Activated CD8-positive, alpha-beta T cell treated with anti-CD3 and anti-CD28 coated beads, Interleukin-2, amount 10 ng/mL, durations not matched to agents 7 days and 5 days (primary cell): ENCODE measurements at regions of chr1 and their contacts with region 1.

Region 1: GRCh38 chr1:30801771-30802198 is 44.2 kb upstream of the LAPTM5 start:
- DNase-seq: peak; percentile 83
- ATAC-seq: peak; percentile 81
- H3K4me3 Mint-ChIP-seq: no peak overlapping the region
- H3K27ac Mint-ChIP-seq: no peak overlapping the region
- H3K4me1 Mint-ChIP-seq: peaks cover 7% of the 10 kb centered on the region
- H3K27me3 Mint-ChIP-seq: peaks cover 44% of the 10 kb centered on the region

Region 2: GRCh38 chr1:30790850-30791778 is 10.7 kb before region 1 on chr1:
- CTCF ChIA-PET with region 1: interaction called, 30 read pairs
- POLR2A ChIA-PET with region 1: interaction called, 3 read pairs
- DNase-seq: peak; percentile 39
- ATAC-seq: peak; percentile 55
- H3K4me3 Mint-ChIP-seq: no peak overlapping the region
- H3K27ac Mint-ChIP-seq: no peak overlapping the region
- H3K4me1 Mint-ChIP-seq: peaks cover 14% of the 10 kb centered on the region
- H3K27me3 Mint-ChIP-seq: peaks cover 22% of the 10 kb centered on the region

Region 3: DNA sequence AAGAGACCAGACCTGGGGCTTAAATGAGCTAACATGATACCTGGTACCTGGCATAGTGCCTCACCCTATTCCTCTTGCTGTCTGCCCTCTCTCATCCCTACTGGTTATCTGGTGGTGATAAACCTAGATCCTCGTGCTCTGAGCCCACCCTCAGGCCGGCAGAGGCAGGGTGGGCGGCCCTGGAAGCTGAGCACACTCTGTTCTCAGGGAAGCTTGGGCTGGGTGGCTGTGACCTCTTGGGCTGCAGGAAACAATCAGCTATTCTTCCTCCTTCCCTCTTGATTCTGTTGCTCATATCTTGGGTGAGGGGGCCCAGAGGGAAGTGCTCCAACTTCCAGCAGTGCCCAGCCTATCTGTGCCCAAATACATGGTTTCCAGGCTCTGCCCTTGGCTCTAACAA is 64.8 kb after region 1 on chr1:
- CTCF ChIA-PET with region 1: interaction called, 14 read pairs
- POLR2A ChIA-PET with region 1: no interaction called
- DNase-seq: no peak
- ATAC-seq: no peak
- H3K4me3 Mint-ChIP-seq: no peak overlapping the region
- H3K27ac Mint-ChIP-seq: no peak overlapping the region
- H3K4me1 Mint-ChIP-seq: peaks cover 5% of the 10 kb centered on the region
- H3K27me3 Mint-ChIP-seq: peaks cover 24% of the 10 kb centered on the region

Region 4: GRCh38 chr1:30911046-30911954 is 109.5 kb after region 1 on chr1:
- CTCF ChIA-PET with region 1: interaction called, 108 read pairs
- POLR2A ChIA-PET with region 1: interaction called, 3 read pairs
- DNase-seq: peak; percentile 67
- ATAC-seq: no peak
- H3K4me3 Mint-ChIP-seq: no peak overlapping the region
- H3K27ac Mint-ChIP-seq: no peak overlapping the region
- H3K4me1 Mint-ChIP-seq: peaks cover 25% of the 10 kb centered on the region
- H3K27me3 Mint-ChIP-seq: peaks cover 29% of the 10 kb centered on the region

Region 5: GRCh38 chr1:30929135-30929889 is 127.5 kb after region 1 on chr1:
- CTCF ChIA-PET with region 1: interaction called, 81 read pairs
- POLR2A ChIA-PET with region 1: interaction called, 3 read pairs
- DNase-seq: peak; percentile 68
- ATAC-seq: peak; percentile 76
- H3K4me3 Mint-ChIP-seq: no peak overlapping the region
- H3K27ac Mint-ChIP-seq: peak overlapping the region; percentile 55
- H3K4me1 Mint-ChIP-seq: peaks cover 8% of the 10 kb centered on the region
- H3K27me3 Mint-ChIP-seq: no peaks in the 10 kb centered on the region